AG04449 (cell line): ENCODE measurements at regions of chr12 and their contacts with region 1.

Region 1: DNA sequence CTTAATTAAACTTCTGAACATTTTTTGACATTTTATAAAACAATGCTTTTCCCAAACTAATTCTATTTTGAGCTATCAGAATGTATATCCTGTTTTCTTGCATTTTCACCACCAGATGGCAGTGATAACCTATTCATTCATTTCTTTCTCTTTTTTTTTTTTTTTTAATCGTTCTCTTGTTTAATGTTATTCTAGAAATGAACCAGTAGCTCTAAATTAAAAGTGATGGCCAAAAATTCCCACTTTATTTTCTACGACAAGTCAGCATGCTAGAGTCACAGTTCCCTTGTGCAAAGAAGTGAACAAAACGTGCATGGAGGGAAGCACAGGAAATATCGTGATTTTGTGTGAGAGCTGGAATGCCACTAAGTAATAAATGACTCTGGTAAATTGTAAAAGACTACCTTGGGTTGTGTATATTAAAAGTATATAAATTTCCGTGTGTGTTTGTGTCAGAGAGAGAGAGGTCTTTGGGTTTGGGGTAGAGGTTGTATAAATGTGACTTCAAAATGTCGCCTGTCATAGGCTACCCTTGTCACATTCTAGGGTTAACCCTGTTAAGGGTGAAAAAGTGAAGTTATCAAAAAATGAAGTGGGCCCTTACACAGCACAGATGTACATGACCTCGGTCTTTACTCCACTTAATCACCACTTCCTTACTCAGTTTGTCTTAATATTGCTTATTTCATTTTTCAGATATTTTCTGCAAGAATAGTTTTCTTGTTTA is 40.4 kb upstream of the LDHB start:
- DNase-seq: no peak
- H3K4me3 ChIP-seq: no peak overlapping the region
- CTCF ChIP-seq: peak; percentile 18

Region 2: GRCh38 chr12:21989819-21990412 is 291.8 kb after region 1 on chr12:
- CTCF ChIA-PET with region 1: interaction called, 142 read pairs
- POLR2A ChIA-PET with region 1: interaction called, 3 read pairs
- DNase-seq: no peak
- H3K4me3 ChIP-seq: no peak overlapping the region
- CTCF ChIP-seq: peak; percentile 8

Region 3: DNA sequence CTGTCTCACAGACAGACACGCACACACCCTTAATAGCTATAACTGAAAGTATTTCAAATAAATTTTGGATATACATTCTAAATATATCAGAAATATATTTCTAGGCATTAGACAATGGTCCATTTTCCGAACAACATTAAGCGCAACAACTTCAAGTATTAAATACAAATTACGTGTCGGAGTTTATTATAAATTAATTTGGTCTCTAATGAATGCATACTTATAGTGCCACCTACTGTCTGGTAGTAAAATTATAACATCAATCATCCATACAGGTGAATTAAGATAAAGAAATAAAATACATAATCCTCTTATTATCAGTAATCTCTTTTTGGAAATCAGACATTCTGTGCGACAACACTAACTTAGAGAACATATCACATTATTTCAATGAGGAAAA is 320.8 kb after region 1 on chr12:
- CTCF ChIA-PET with region 1: interaction called, 20 read pairs
- POLR2A ChIA-PET with region 1: no interaction called
- DNase-seq: no peak
- H3K4me3 ChIP-seq: no peak overlapping the region
- CTCF ChIP-seq: no peak